GM12878 (cell line): ENCODE measurements at regions of chr3 and their contacts with region 1.

Region 1: DNA sequence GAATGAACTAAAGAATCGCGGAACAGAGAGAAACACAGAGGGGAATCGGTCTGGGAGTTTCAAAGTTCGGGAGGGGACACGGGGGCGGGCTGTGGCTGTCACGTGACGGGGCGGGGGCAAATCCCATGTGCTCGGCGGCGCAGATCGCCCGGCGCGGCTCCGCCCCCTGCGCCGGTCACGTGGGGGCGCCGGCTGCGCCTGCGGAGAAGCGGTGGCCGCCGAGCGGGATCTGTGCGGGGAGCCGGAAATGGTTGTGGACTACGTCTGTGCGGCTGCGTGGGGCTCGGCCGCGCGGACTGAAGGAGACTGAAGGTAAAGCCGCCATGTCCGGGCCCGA is at the start of gene EIF4G1:
- DNase-seq: peak; percentile 61
- ATAC-seq: peak; percentile 88
- H3K4me3 ChIP-seq: peak within 1 kb of the TSS; percentile 100
- H3K27ac ChIP-seq: peak within 1 kb of the TSS; percentile 92
- H3K4me1 ChIP-seq: 0 out of 2 replicates have a peak, but pooled peaks cover 3% of the 10 kb centered on the region
- H3K27me3 ChIP-seq: no peaks in the 10 kb centered on the region
- CTCF ChIP-seq: no peak
- EP300 ChIP-seq: no peak
- POLR2A ChIP-seq: peak; percentile 86
- RAD21 ChIP-seq: no peak
- polyA plus RNA-seq, gene EIF4G1: 5.7 to 12.9 TPM

Region 2: DNA sequence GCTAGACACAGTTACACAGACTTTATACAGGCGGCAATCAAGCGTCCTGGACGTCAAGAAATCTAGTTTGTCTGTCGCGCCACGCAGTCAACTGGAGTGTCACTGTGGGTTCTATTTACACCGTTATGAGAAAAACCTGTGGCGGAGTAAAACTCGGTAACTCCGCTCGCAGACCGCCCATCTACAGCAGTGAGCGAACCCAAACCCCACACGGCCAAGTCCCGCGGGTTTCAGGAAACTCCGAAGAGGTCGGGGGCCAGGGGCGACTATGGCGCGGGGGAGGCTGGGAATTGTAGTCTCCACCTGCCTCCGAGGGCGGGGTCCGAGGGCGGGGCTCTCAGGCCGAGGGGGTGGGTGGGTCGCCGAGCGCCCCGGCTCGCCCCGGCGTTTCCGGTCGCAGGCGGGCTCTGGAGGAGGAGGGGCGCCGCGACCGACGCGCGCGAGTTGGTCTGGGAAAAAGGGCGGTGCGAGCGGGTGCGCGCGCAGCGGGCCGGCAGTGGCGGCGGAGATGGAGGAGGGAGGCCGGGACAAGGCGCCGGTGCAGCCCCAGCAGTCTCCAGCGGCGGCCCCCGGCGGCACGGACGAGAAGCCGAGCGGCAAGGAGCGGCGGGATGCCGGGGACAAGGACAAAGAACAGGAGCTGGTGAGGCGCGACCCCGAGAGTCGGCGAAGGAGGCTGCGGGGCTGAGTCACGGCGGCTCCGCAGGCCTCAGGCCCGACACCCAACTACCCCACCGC is 15.4 kb before region 1 on chr3 and contains the start of gene PSMD2:
- CTCF ChIA-PET with region 1: interaction called, 6 read pairs
- POLR2A ChIA-PET with region 1: interaction called, 4 read pairs
- RAD21 ChIA-PET with region 1: no interaction called
- SMC1A ChIA-PET with region 1: no interaction called
- in situ Hi-C with region 1: no loop called
- intact Hi-C with region 1: loop called (anchors 2 kb)
- DNase-seq: peak; percentile 73
- ATAC-seq: peak; percentile 98
- H3K4me3 ChIP-seq: peak within 1 kb of the TSS; percentile 88
- H3K27ac ChIP-seq: peak within 1 kb of the TSS; percentile 66
- H3K4me1 ChIP-seq: peaks cover 3% of the 10 kb centered on the region
- H3K27me3 ChIP-seq: no peaks in the 10 kb centered on the region
- CTCF ChIP-seq: no peak
- EP300 ChIP-seq: no peak
- POLR2A ChIP-seq: peak; percentile 88
- RAD21 ChIP-seq: no peak
- polyA plus RNA-seq, gene PSMD2: 103 to 111 TPM

Region 3: GRCh38 chr3:184334470-184335158 is 20.3 kb after region 1 on chr3:
- CTCF ChIA-PET with region 1: no interaction called
- POLR2A ChIA-PET with region 1: no interaction called
- RAD21 ChIA-PET with region 1: no interaction called
- SMC1A ChIA-PET with region 1: no interaction called
- in situ Hi-C with region 1: no loop called
- intact Hi-C with region 1: no loop called
- DNase-seq: no peak
- ATAC-seq: no peak
- H3K4me3 ChIP-seq: no peak overlapping the region
- H3K27ac ChIP-seq: no peak overlapping the region
- H3K4me1 ChIP-seq: peaks cover 8% of the 10 kb centered on the region
- H3K27me3 ChIP-seq: no peaks in the 10 kb centered on the region
- CTCF ChIP-seq: no peak
- EP300 ChIP-seq: no peak
- POLR2A ChIP-seq: peak; percentile 15
- RAD21 ChIP-seq: no peak

Region 4: GRCh38 chr3:184362668-184363540 is 48.6 kb after region 1 on chr3:
- CTCF ChIA-PET with region 1: no interaction called
- POLR2A ChIA-PET with region 1: interaction called, 4 read pairs
- RAD21 ChIA-PET with region 1: no interaction called
- SMC1A ChIA-PET with region 1: no interaction called
- in situ Hi-C with region 1: no loop called
- intact Hi-C with region 1: loop called (anchors 5 kb)
- DNase-seq: peak; percentile 94
- ATAC-seq: peak; percentile 90
- H3K4me3 ChIP-seq: peak overlapping the region; percentile 67
- H3K27ac ChIP-seq: peak overlapping the region; percentile 87
- H3K4me1 ChIP-seq: peaks cover 10% of the 10 kb centered on the region
- H3K27me3 ChIP-seq: no peaks in the 10 kb centered on the region; a peak in 1 of 4 replicates
- CTCF ChIP-seq: peak; percentile 53 to 80 (median 60)
- EP300 ChIP-seq: no peak
- POLR2A ChIP-seq: peak; percentile 91
- RAD21 ChIP-seq: no peak

Region 5: GRCh38 chr3:184513276-184514170 is 199.2 kb after region 1 on chr3:
- CTCF ChIA-PET with region 1: no interaction called
- POLR2A ChIA-PET with region 1: no interaction called
- RAD21 ChIA-PET with region 1: no interaction called
- SMC1A ChIA-PET with region 1: no interaction called
- in situ Hi-C with region 1: no loop called
- intact Hi-C with region 1: no loop called
- DNase-seq: peak; percentile 7
- ATAC-seq: peak; percentile 100
- H3K4me3 ChIP-seq: no peak overlapping the region
- H3K27ac ChIP-seq: no peak overlapping the region
- H3K4me1 ChIP-seq: no peaks in the 10 kb centered on the region
- H3K27me3 ChIP-seq: peaks cover 2 to 12% of the 10 kb centered on the region in 2 experiments
- CTCF ChIP-seq: peak; percentile 86 to 90 (median 90)
- EP300 ChIP-seq: no peak
- POLR2A ChIP-seq: no peak
- RAD21 ChIP-seq: peak; percentile 78